HepG2 (cell line): ENCODE measurements at regions of chr4 and their contacts with region 1.

Region 1: GRCh38 chr4:154779362-154779947 is 1.6 kb upstream of the RBM46 start:
- DNase-seq: peak; percentile 23
- ATAC-seq: no peak
- H3K4me3 ChIP-seq: no peak overlapping the region
- H3K27ac ChIP-seq: no peak overlapping the region
- H3K4me1 ChIP-seq: no peaks in the 10 kb centered on the region
- H3K27me3 ChIP-seq: no peaks in the 10 kb centered on the region
- CTCF ChIP-seq: peak; percentile 57
- EP300 ChIP-seq: no peak
- POLR2A ChIP-seq: no peak
- RAD21 ChIP-seq: 0 out of 2 replicates have a peak, but pooled peaks have one; percentile 23

Region 2: GRCh38 chr4:154551872-154552686 is 227.4 kb before region 1 on chr4:
- CTCF ChIA-PET with region 1: no interaction called
- POLR2A ChIA-PET with region 1: no interaction called
- in situ Hi-C with region 1: loop called (anchors 5 kb)
- intact Hi-C with region 1: loop called (anchors 1 kb)
- DNase-seq: peak; percentile 74
- ATAC-seq: peak; percentile 61
- H3K4me3 ChIP-seq: no peak overlapping the region
- H3K27ac ChIP-seq: no peak overlapping the region
- H3K4me1 ChIP-seq: peaks cover 21% of the 10 kb centered on the region
- H3K27me3 ChIP-seq: no peaks in the 10 kb centered on the region; a peak in 1 of 5 replicates
- CTCF ChIP-seq: peak; percentile 84
- EP300 ChIP-seq: no peak
- POLR2A ChIP-seq: no peak
- RAD21 ChIP-seq: peak; percentile 76; the same call in 1 of the 2 replicates

Region 3: DNA sequence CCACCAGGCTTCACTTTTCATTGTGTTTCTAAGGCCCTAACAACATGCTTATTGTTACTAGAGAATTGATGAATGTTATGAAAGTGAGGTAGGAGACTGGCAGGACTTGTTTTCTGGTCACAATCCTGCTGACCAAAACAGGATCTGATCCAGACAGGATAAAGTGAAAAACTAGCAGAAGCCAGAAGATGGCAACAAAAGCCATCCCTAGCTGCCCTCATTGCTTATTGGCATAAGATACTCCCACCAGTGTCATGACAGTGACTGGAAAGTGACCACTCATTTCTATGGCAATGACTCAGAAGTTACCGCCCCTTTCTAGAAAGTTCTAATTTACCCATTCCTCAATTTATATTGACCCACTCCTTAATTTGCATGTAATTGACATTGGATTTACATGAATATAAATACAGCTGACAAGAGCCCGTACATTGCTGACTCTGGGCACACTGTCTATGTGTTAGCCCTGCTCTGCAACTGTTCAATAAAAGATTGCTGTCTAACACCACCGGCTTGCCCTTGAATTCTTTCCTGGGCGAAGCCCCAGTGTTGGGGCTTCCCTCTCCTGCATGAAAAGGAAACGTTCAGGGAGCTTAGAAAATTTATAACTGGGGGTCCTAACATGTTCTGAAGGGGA is 137.0 kb before region 1 on chr4:
- CTCF ChIA-PET with region 1: interaction called, 18 read pairs
- POLR2A ChIA-PET with region 1: no interaction called
- in situ Hi-C with region 1: loop called (anchors 5 kb)
- intact Hi-C with region 1: loop called (anchors 1 kb)
- DNase-seq: no peak
- ATAC-seq: peak; percentile 63; the same call in 2 of the 3 replicates
- H3K4me3 ChIP-seq: no peak overlapping the region
- H3K27ac ChIP-seq: no peak overlapping the region
- H3K4me1 ChIP-seq: no peaks in the 10 kb centered on the region
- H3K27me3 ChIP-seq: no peaks in the 10 kb centered on the region; a peak in 2 of 5 replicates
- CTCF ChIP-seq: peak; percentile 51
- EP300 ChIP-seq: no peak
- POLR2A ChIP-seq: no peak
- RAD21 ChIP-seq: no peak

Region 4: GRCh38 chr4:154686838-154687237 is 92.6 kb before region 1 on chr4:
- CTCF ChIA-PET with region 1: no interaction called
- POLR2A ChIA-PET with region 1: no interaction called
- in situ Hi-C with region 1: no loop called
- intact Hi-C with region 1: loop called (anchors 2 kb)
- DNase-seq: no peak
- ATAC-seq: no peak
- H3K4me3 ChIP-seq: no peak overlapping the region
- H3K27ac ChIP-seq: no peak overlapping the region
- H3K4me1 ChIP-seq: peaks cover 15% of the 10 kb centered on the region
- H3K27me3 ChIP-seq: no peaks in the 10 kb centered on the region
- CTCF ChIP-seq: no peak
- EP300 ChIP-seq: no peak
- POLR2A ChIP-seq: no peak
- RAD21 ChIP-seq: no peak